Prostate gland (tissue), 2 donors: ENCODE measurements at regions of chr19 and their contacts with region 1.

Region 1: DNA sequence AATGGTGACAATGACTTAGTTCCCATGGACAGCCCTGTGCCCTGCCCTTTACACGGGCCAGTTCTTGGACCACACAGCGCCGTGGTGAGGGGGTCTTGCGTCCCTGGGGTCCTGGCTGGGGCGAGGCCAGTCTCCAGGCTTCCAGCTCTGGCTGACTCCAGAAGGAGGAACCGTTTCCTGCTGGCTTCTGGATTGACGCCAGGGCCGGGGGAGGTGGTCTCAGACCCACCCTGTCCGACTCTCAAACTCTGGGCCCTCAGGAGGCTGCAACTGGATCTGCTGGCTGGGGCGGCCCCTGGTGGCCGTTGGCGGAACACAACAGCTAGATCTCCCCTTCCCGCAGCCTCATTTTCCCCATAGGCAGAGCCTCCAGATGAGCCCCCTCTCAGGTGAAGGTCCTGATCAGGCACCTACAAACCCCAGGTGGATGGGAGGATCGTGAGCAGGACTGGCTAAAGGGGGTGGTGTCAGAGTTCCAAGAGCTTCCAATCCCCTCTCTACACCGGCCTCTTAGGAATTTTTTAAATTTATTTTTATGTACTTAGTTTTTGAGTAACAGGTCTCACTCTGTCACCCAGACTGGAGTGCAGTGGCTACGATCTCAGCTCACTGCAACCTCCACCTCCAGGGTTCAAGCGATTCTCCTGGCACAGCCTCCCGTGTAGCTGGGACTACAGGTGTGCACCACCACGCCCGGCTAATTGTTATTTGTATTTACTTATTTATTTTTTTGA is 8.0 kb downstream of the CCDC194 start:
- DNase-seq: no peak
- H3K4me3 ChIP-seq: no peak overlapping the region
- H3K27ac ChIP-seq: no peak overlapping the region
- H3K4me1 ChIP-seq: no peaks in the 10 kb centered on the region
- H3K27me3 ChIP-seq: no peaks in the 10 kb centered on the region
- CTCF ChIP-seq: peak; percentile 70 to 87 (median 74)
- POLR2A ChIP-seq: no peak

Region 2: GRCh38 chr19:17292286-17293097 is 93.6 kb before region 1 on chr19:
- intact Hi-C with region 1: loop called (anchors 5 kb)
- DNase-seq: peak; percentile 59
- H3K4me3 ChIP-seq: peak overlapping the region; percentile 22 to 35
- H3K27ac ChIP-seq: peak overlapping the region; percentile 29 to 44
- H3K4me1 ChIP-seq: no peaks in the 10 kb centered on the region
- H3K27me3 ChIP-seq: no peaks in the 10 kb centered on the region
- CTCF ChIP-seq: peak in 3 of 4 experiments; percentile 15 to 64 (median 61)
- POLR2A ChIP-seq: no peak

Region 3: GRCh38 chr19:17346109-17346671 is 39.9 kb before region 1 on chr19:
- intact Hi-C with region 1: loop called (anchors 2 kb)
- DNase-seq: peak; percentile 60
- H3K4me3 ChIP-seq: no peak overlapping the region
- H3K27ac ChIP-seq: no peak overlapping the region
- H3K4me1 ChIP-seq: no peaks in the 10 kb centered on the region
- H3K27me3 ChIP-seq: no peaks in the 10 kb centered on the region
- CTCF ChIP-seq: peak; percentile 83 to 92 (median 90)
- POLR2A ChIP-seq: no peak

Region 4: GRCh38 chr19:17419621-17420466 is 33.8 kb after region 1 on chr19 and contains the start of gene MVB12A:
- intact Hi-C with region 1: no loop called
- DNase-seq: peak; percentile 97
- H3K4me3 ChIP-seq: peak within 1 kb of the TSS; percentile 88 to 95
- H3K27ac ChIP-seq: peak within 1 kb of the TSS; percentile 72 to 73
- H3K4me1 ChIP-seq: peaks cover 5% of the 10 kb centered on the region
- H3K27me3 ChIP-seq: no peaks in the 10 kb centered on the region
- CTCF ChIP-seq: peak in 2 of 4 experiments; percentile 7 to 24
- POLR2A ChIP-seq: peak; percentile 48
- total RNA-seq, gene MVB12A: 71.2 to 75.7 TPM